ENCODE measurements at regions of chr5 and their contacts with region 1.

Region 1: DNA sequence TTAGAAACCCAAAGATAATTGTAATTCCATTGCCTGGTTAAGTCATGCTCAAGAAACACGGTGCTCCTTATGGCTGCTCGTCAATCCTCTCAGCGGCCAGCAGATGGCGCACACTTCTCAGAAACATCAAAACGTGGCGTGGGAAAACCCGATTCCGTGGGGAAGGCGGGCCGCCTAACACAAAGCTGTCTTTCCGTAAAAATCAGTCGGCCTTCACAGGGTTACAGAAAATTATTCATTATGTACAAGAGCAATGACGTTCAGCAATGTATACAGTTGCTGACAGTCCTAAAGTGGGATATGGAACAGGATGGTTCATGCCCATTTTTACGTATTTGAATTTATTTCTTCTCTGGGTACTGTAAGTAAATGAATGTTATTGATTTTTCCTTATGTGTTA is 83.5 kb downstream of the PDE4D start:
- DNase-seq: peak in 1 of 2 donors; percentile 84
- H3K4me3 ChIP-seq: peak overlapping the region in 1 of 2 donors; percentile 42
- H3K27ac ChIP-seq: no peak overlapping the region
- H3K4me1 ChIP-seq: peaks cover 0 to 3% of the 10 kb centered on the region in 2 donors
- H3K27me3 ChIP-seq: no peaks in the 10 kb centered on the region
- CTCF ChIP-seq: peak; percentile 65 to 90 (median 88)

Region 2: DNA sequence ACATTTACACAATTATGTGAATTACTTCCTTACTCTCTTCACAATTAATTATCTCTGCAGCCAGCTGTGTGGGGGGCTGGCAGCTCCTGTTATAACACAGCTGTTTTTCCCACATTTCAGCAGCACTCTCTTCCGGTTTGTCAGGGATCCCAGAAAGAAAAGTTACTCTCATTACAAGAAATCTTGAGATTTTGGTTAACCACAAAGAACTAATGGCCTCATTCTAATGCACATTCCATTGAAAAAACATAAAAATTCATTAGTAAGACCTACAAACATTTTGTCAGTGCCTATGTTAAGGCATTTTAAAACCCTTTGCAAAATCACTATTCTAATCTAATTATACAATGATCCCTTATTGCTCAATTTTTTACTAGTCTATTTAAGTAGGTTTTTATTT is 19.3 kb after region 1 on chr5:
- intact Hi-C with region 1: no loop called
- DNase-seq: no peak
- H3K4me3 ChIP-seq: no peak overlapping the region
- H3K27ac ChIP-seq: no peak overlapping the region
- H3K4me1 ChIP-seq: no peaks in the 10 kb centered on the region
- H3K27me3 ChIP-seq: no peaks in the 10 kb centered on the region
- CTCF ChIP-seq: no peak

Region 3: GRCh38 chr5:60287174-60287771 is 477.2 kb after region 1 on chr5:
- intact Hi-C with region 1: loop called (anchors 10 kb)
- DNase-seq: no peak
- H3K4me3 ChIP-seq: no peak overlapping the region
- H3K27ac ChIP-seq: no peak overlapping the region
- H3K4me1 ChIP-seq: no peaks in the 10 kb centered on the region
- H3K27me3 ChIP-seq: no peaks in the 10 kb centered on the region
- CTCF ChIP-seq: peak; percentile 7 to 24 (median 21)

Region 4: GRCh38 chr5:60457233-60457632 is 647.2 kb after region 1 on chr5:
- intact Hi-C with region 1: loop called (anchors 5 kb)
- DNase-seq: no peak
- H3K4me3 ChIP-seq: no peak overlapping the region
- H3K27ac ChIP-seq: no peak overlapping the region
- H3K4me1 ChIP-seq: peaks cover 0 to 2% of the 10 kb centered on the region in 2 donors
- H3K27me3 ChIP-seq: no peaks in the 10 kb centered on the region
- CTCF ChIP-seq: no peak

Region 5: GRCh38 chr5:60586307-60586901 is 776.4 kb after region 1 on chr5:
- intact Hi-C with region 1: loop called (anchors 2 kb)
- DNase-seq: no peak
- H3K4me3 ChIP-seq: no peak overlapping the region
- H3K27ac ChIP-seq: no peak overlapping the region
- H3K4me1 ChIP-seq: no peaks in the 10 kb centered on the region
- H3K27me3 ChIP-seq: no peaks in the 10 kb centered on the region
- CTCF ChIP-seq: peak; percentile 6 to 57 (median 54)

Region 6: GRCh38 chr5:60668686-60669304 is 858.8 kb after region 1 on chr5:
- intact Hi-C with region 1: loop called (anchors 5 kb)
- DNase-seq: no peak
- H3K4me3 ChIP-seq: no peak overlapping the region
- H3K27ac ChIP-seq: no peak overlapping the region
- H3K4me1 ChIP-seq: peaks cover 0 to 2% of the 10 kb centered on the region in 2 donors
- H3K27me3 ChIP-seq: no peaks in the 10 kb centered on the region
- CTCF ChIP-seq: peak; percentile 14 to 66 (median 55)

Region 7: GRCh38 chr5:60754495-60754894 is 944.5 kb after region 1 on chr5:
- intact Hi-C with region 1: no loop called
- DNase-seq: no peak
- H3K4me3 ChIP-seq: no peak overlapping the region
- H3K27ac ChIP-seq: no peak overlapping the region
- H3K4me1 ChIP-seq: no peaks in the 10 kb centered on the region
- H3K27me3 ChIP-seq: no peaks in the 10 kb centered on the region
- CTCF ChIP-seq: no peak